ENCODE measurements at regions of chr20 and their contacts with region 1.

Region 1: GRCh38 chr20:36856691-36857635 is 19.0 kb upstream of the TLDC2 start:
- DNase-seq: peak; percentile 89
- H3K4me3 Mint-ChIP-seq: peak overlapping the region; percentile 15
- H3K27ac Mint-ChIP-seq: peak overlapping the region; percentile 62
- H3K4me1 Mint-ChIP-seq: peaks cover 18% of the 10 kb centered on the region
- H3K27me3 Mint-ChIP-seq: peaks cover 7% of the 10 kb centered on the region

Region 2: DNA sequence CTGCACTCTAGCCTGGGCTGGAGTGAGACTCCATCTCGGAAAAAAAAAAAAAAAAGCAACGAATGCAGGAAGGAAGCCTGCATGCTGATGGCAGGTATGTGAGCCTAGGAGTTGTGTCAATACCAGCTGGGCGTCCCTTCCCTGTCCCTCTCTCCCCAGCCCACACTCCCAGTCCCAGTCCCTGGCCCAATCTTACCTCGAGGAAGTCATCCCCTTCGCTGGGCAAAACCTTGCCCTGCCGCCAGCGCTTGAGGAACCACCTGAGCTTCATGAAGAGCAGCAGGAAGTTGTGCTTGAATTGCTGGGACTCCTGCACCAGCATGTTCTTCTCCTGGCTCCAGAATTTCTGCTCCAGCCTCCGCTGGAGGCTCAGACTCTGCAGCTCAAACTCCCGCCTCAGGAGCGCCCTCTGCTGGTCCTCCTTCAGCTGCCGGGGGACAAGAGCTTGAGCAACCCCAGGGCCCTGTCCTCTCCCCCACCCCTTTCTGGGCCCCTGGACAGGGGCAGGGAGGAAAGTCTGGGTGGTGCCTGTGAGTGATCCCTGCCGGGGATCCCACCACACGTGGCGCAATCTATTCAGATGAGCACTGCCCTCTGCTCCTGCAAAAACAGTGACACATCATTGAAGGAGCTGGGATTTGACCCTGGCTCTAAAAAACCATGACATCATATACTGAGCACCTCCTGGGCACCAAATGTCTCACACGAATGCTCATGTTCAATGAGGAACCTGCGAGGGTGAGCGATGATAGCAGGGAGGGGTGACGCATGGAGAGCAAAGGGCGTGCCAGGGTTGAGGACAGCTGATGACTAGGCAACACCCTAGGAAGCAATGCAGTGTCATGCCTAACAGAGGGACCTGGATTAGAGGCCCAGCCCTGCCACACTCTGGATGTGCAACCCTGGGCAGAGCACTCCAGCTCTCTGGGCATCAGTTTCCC is 48.4 kb before region 1 on chr20:
- intact Hi-C with region 1: loop called (anchors 10 kb)
- DNase-seq: peak; percentile 92
- H3K4me3 Mint-ChIP-seq: no peak overlapping the region
- H3K27ac Mint-ChIP-seq: peak overlapping the region; percentile 11
- H3K4me1 Mint-ChIP-seq: peaks cover 4% of the 10 kb centered on the region
- H3K27me3 Mint-ChIP-seq: no peaks in the 10 kb centered on the region

Region 3: DNA sequence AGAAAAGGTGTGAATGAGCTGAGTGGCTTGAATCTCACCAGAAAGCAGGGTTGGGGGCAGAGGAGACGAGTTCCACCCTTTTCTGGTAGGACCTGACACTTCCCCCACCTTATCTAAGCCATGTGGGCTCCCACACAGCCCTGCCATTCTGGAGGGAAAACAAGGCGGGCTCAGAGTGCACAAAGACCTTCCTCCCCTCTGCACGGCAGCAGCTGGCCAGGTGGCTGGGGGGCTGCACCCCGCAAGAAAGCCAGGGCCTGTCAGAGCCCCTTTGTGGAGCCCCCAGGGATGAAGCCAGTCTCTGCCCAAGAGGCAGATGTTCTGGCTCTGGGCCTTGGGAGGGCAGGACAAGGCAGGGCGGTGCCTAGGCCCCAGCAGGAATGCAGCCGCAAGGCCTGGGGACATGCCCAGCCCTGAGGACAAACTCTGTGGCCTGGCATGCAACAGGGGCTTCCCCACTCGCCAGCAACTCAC is 35.0 kb before region 1 on chr20:
- intact Hi-C with region 1: no loop called
- DNase-seq: no peak
- H3K4me3 Mint-ChIP-seq: no peak overlapping the region
- H3K27ac Mint-ChIP-seq: no peak overlapping the region
- H3K4me1 Mint-ChIP-seq: peaks cover 2% of the 10 kb centered on the region
- H3K27me3 Mint-ChIP-seq: peaks cover 6% of the 10 kb centered on the region

Region 4: DNA sequence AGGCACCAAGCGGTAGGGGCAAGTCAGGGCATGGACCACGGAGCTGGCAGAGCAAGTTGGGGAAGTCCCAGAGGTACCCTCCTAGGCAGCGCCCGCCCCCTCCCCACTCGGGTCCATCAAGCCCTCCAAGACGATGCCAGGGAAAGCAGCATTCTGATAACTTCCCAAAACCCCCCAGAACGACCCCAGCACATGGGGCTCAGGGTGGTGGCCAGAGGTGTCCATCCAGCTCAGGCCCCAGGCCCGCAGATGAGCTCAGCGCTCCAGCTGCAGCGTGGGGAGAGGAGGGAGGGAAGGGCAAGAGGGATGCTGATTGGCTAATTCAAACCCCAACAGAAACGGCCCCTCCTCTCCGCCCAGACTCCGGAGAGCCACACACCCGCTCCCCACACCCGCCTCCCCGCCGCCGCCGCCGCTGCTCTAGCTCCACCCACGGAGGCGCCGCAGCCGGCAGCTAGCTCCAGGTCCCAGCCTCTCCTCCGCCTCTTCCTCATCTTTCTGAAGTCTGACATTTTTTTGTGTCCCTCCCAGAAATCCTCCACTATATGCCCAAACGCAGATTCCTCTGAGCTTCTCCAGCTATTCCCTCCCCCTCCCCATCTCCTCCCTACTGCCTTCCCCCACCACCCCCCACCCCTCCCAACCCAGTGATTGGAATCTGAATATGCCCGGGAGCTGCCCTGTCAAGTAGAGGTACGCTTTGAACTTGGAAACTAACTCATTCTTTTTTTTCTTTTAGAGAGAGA is 21.3 kb before region 1 on chr20:
- intact Hi-C with region 1: loop called (anchors 2 kb)
- DNase-seq: peak; percentile 96
- H3K4me3 Mint-ChIP-seq: peak overlapping the region; percentile 88
- H3K27ac Mint-ChIP-seq: peak overlapping the region; percentile 91
- H3K4me1 Mint-ChIP-seq: peaks cover 19% of the 10 kb centered on the region
- H3K27me3 Mint-ChIP-seq: no peaks in the 10 kb centered on the region

Region 5: GRCh38 chr20:37804584-37805566 is 947.9 kb after region 1 on chr20:
- intact Hi-C with region 1: no loop called
- DNase-seq: no peak
- H3K4me3 Mint-ChIP-seq: no peak overlapping the region
- H3K27ac Mint-ChIP-seq: peak overlapping the region; percentile 17
- H3K4me1 Mint-ChIP-seq: peaks cover 3% of the 10 kb centered on the region
- H3K27me3 Mint-ChIP-seq: no peaks in the 10 kb centered on the region

Measured in activated CD4-positive, alpha-beta T cell treated with anti-CD3 and anti-CD28 coated beads, Interleukin-2, amount 10 ng/mL, durations not matched to agents 24 days and 14 days (primary cell).